Motor neuron (in vitro differentiated cells): ENCODE measurements at regions of chr15 and their contacts with region 1.

Region 1: GRCh38 chr15:78315686-78316282 is 16.4 kb upstream of the SKIC8 start:
- ATAC-seq: peak; percentile 23 to 67 (median 38)
- H3K4me3 ChIP-seq: no peak overlapping the region
- H3K27ac ChIP-seq: peak overlapping the region; percentile 87 to 89
- H3K4me1 ChIP-seq: peaks cover 74 to 75% of the 10 kb centered on the region in 2 donors

Region 2: GRCh38 chr15:77633134-77633912 is 682.5 kb before region 1 on chr15:
- in situ Hi-C with region 1: no loop called
- ATAC-seq: peak; percentile 71 to 91 (median 79)
- H3K4me3 ChIP-seq: peak overlapping the region; percentile 57 to 97 (median 86)
- H3K27ac ChIP-seq: peak overlapping the region; percentile 92 to 95
- H3K4me1 ChIP-seq: peaks cover 20 to 40% of the 10 kb centered on the region in 2 donors

Region 3: DNA sequence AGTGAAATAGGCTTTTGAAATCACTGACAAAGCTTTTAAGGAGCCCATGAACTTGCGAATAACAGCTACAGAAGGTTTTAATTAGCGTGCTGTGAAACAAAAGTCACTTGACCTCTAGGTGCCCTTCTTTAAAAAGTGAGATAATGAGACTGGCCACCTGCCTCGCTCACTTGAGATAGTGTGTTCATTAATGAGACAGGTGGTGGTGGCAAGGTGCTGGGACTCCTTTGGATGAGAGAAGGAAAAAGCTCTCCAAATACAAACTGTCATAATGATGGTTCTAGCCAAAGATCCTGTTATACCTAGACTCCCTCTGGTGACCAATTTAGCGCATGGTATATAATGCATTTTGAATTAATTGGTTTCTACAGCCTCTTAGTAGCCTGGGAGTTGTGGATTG is 99.5 kb after region 1 on chr15:
- in situ Hi-C with region 1: loop called in 6 of 9 experiments (anchors 10 to 25 kb)
- ATAC-seq: peak in 7 of 8 experiments; percentile 22 to 71 (median 31)
- H3K4me3 ChIP-seq: no peak overlapping the region
- H3K27ac ChIP-seq: no peak overlapping the region
- H3K4me1 ChIP-seq: peaks cover 12 to 35% of the 10 kb centered on the region in 2 donors

Region 4: GRCh38 chr15:78422571-78423340 is 107.0 kb after region 1 on chr15:
- in situ Hi-C with region 1: loop called in 6 of 9 experiments (anchors 10 to 25 kb)
- ATAC-seq: peak; percentile 42 to 86 (median 59)
- H3K4me3 ChIP-seq: no peak overlapping the region
- H3K27ac ChIP-seq: no peak overlapping the region
- H3K4me1 ChIP-seq: peaks cover 5 to 7% of the 10 kb centered on the region in 2 donors

Region 5: GRCh38 chr15:78437762-78438302 is 122.0 kb after region 1 on chr15 and contains the start of gene IREB2:
- in situ Hi-C with region 1: loop called in 1 of 9 experiments (anchors 10 kb)
- ATAC-seq: peak; percentile 85 to 96 (median 93)
- H3K4me3 ChIP-seq: peak within 1 kb of the TSS; percentile 73 to 93 (median 86)
- H3K27ac ChIP-seq: peak within 1 kb of the TSS; percentile 95 to 96
- H3K4me1 ChIP-seq: peaks cover 12 to 22% of the 10 kb centered on the region in 2 donors
- total RNA-seq, gene IREB2: 27.1 to 74.6 (median 33.3) TPM

Region 6: DNA sequence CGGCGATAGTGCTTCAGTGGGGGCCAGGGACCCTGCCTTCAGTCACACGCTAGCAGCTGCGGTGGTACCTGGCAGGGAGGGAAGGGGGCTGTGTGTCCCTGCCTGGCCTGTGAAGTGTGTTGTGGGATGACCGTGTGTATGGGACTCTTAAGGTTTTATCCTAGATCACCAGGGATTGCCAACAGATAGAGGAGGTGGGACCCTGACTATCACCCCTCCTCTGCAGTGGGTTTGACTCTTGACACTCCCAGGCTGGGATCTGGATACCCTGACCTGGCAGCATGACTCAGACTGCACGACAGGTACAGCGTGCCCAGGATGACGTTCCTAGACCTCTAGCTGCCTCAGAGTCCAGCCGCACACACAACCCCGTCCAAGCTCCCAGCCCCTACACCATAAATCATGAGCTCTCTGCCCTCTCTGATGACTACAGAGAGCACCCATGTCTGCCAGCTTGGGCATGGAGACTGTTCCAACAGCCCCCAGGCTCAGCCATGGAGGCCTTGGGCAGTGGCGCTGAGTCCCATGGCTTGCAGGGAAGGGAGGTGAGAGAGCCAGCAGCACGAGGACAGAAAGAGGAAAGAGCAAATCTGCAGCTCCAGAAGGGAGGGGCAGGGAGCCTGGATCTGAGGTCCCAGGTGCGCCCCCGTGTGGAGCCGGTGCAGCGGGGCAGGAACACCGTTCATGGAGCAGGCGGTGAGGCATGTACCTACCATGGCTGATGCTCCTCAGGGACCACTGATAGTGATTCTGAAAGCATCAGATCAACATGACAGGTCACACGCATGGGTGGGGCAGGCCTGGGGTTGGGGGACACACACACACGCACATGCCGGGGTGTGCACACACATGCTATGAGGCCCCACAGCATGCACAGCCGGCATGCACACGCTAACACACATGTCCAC is 424.5 kb after region 1 on chr15:
- in situ Hi-C with region 1: no loop called
- ATAC-seq: peak; percentile 30 to 87 (median 53)
- H3K4me3 ChIP-seq: no peak overlapping the region
- H3K27ac ChIP-seq: no peak overlapping the region
- H3K4me1 ChIP-seq: no peaks in the 10 kb centered on the region

Region 7: GRCh38 chr15:79779746-79780145 is 1464.0 kb after region 1 on chr15:
- in situ Hi-C with region 1: no loop called
- ATAC-seq: no peak
- H3K4me3 ChIP-seq: no peak overlapping the region
- H3K27ac ChIP-seq: no peak overlapping the region
- H3K4me1 ChIP-seq: no peaks in the 10 kb centered on the region